ENCODE measurements at regions of chr19 and their contacts with region 1.

Region 1: DNA sequence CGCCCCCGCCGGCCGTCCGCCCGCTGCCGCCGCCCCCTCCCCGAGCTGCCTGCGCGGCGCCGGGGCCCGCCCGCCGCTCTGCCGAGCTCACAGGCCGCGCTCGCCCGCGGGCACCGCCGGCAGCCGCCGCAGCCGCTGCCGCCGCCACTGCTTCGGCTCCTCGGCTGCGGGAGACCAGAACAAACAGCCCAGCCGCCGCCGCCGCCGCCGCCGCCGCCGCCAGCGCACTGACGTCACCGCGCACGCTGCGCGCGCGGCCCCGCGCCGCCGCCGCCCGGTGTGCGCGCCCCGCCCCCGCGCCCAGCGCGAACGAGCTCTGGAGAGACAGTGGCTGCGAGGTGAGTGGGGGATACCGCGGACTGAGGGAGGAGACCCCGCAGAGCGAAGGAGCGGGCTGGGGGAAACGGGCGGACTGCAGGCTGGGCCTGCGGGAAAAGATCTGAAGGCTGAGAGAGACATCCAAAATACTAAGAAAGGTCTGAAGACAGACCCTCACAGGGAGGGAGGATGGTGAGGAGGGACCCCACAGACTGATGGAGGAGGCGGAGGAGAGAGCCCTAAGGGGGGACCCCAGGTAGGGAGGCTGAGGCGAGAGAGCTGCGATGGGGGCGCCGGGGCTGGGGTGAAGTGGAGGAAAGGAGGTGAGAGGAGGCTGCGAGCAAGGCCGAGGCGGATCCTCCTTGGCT is at the start of gene BRD4:
- DNase-seq: peak; percentile 58 to 88 (median 77)
- ATAC-seq: peak; percentile 63
- H3K4me3 ChIP-seq: peak within 1 kb of the TSS; percentile 81 to 97
- H3K4me3 Mint-ChIP-seq: peak within 1 kb of the TSS; percentile 95
- H3K27ac ChIP-seq: peak within 1 kb of the TSS; percentile 71 to 83
- H3K27ac Mint-ChIP-seq: peak within 1 kb of the TSS; percentile 96
- H3K4me1 ChIP-seq: peaks cover 42% of the 10 kb centered on the region
- H3K4me1 Mint-ChIP-seq: peaks cover 42% of the 10 kb centered on the region
- H3K27me3 ChIP-seq: no peaks in the 10 kb centered on the region
- H3K27me3 Mint-ChIP-seq: no peaks in the 10 kb centered on the region
- CTCF ChIP-seq: no peak
- total RNA-seq, gene BRD4: 123 to 128 TPM

Region 2: GRCh38 chr19:15125232-15126067 is 207.0 kb before region 1 on chr19:
- CTCF ChIA-PET with region 1: no interaction called
- POLR2A ChIA-PET with region 1: no interaction called
- intact Hi-C with region 1: loop called in 1 of 2 experiments (anchors 2 kb)
- DNase-seq: peak; percentile 94 to 99 (median 97)
- ATAC-seq: peak; percentile 85
- H3K4me3 ChIP-seq: peak overlapping the region; percentile 98 to 99
- H3K4me3 Mint-ChIP-seq: peak overlapping the region; percentile 99
- H3K27ac ChIP-seq: peak overlapping the region; percentile 91 to 98
- H3K27ac Mint-ChIP-seq: peak overlapping the region; percentile 98
- H3K4me1 ChIP-seq: peaks cover 34% of the 10 kb centered on the region
- H3K4me1 Mint-ChIP-seq: peaks cover 47% of the 10 kb centered on the region
- H3K27me3 ChIP-seq: no peaks in the 10 kb centered on the region
- H3K27me3 Mint-ChIP-seq: no peaks in the 10 kb centered on the region
- CTCF ChIP-seq: no peak

Region 3: DNA sequence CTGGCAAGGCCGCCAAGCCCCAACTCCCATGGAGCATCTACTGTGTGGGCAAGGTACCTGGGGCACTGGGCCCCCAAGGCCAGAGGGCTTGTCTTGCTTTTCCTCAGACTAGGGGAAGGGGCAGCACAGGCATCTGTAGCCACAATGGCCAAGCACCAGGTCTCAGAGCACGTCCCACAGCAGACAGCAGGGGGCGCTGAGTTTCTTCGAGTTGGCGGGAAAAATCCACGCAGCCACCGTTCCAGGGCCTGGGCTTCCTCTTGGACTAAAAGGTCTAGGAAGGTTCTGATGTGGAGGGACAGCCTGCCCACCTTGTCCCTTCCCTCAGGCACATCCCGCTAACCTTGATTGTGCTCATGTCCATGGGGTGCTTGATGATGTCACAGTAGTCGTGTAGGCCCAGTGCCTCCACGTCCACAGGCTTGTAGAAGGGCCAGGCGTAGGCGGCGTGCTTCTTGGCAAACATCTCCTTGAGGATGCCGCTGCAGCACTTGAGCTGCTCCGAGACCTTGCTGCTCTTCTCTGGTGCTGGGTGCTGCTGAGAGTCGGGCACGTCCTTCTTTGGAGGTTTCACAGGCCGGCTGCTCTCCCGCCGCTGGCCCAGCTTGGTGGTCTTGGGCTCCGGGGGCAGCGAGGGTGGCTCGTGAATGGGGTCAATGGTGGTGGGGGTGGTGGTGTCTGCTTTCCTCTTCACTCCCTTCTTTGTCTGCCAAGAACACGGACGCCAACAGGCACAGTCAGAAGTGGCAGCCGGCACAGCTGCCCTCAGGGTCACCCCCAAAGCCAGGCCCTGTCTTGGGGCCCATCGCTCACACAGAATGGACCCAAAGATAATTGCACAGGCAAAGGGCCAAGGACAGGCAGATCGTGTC is 68.2 kb before region 1 on chr19:
- CTCF ChIA-PET with region 1: no interaction called
- POLR2A ChIA-PET with region 1: no interaction called
- intact Hi-C with region 1: loop called in 1 of 2 experiments (anchors 2 kb)
- DNase-seq: peak; percentile 46 to 82 (median 72)
- ATAC-seq: peak; percentile 71
- H3K4me3 ChIP-seq: no peak overlapping the region
- H3K4me3 Mint-ChIP-seq: no peak overlapping the region
- H3K27ac ChIP-seq: no peak overlapping the region
- H3K27ac Mint-ChIP-seq: no peak overlapping the region
- H3K4me1 ChIP-seq: no peaks in the 10 kb centered on the region
- H3K4me1 Mint-ChIP-seq: peaks cover 3% of the 10 kb centered on the region
- H3K27me3 ChIP-seq: no peaks in the 10 kb centered on the region
- H3K27me3 Mint-ChIP-seq: no peaks in the 10 kb centered on the region
- CTCF ChIP-seq: peak; percentile 70

Region 4: GRCh38 chr19:15288146-15288963 is 44.1 kb before region 1 on chr19:
- CTCF ChIA-PET with region 1: no interaction called
- POLR2A ChIA-PET with region 1: interaction called, 4 read pairs
- intact Hi-C with region 1: loop called in 1 of 2 experiments (anchors 2 kb)
- DNase-seq: peak in 1 of 9 experiments; percentile 32
- ATAC-seq: no peak
- H3K4me3 ChIP-seq: peak overlapping the region in 1 of 2 experiments; percentile 6
- H3K4me3 Mint-ChIP-seq: peak overlapping the region; percentile 38
- H3K27ac ChIP-seq: no peak overlapping the region
- H3K27ac Mint-ChIP-seq: peak overlapping the region; percentile 55
- H3K4me1 ChIP-seq: peaks cover 95% of the 10 kb centered on the region
- H3K4me1 Mint-ChIP-seq: peaks cover 96% of the 10 kb centered on the region
- H3K27me3 ChIP-seq: no peaks in the 10 kb centered on the region
- H3K27me3 Mint-ChIP-seq: no peaks in the 10 kb centered on the region
- CTCF ChIP-seq: no peak

Region 5: GRCh38 chr19:15304140-15304705 is 28.2 kb before region 1 on chr19:
- CTCF ChIA-PET with region 1: no interaction called
- POLR2A ChIA-PET with region 1: no interaction called
- intact Hi-C with region 1: no loop called
- DNase-seq: no peak
- ATAC-seq: peak; percentile 34
- H3K4me3 ChIP-seq: no peak overlapping the region
- H3K4me3 Mint-ChIP-seq: peak overlapping the region; percentile 30
- H3K27ac ChIP-seq: no peak overlapping the region
- H3K27ac Mint-ChIP-seq: peak overlapping the region; percentile 41
- H3K4me1 ChIP-seq: peaks cover 64% of the 10 kb centered on the region
- H3K4me1 Mint-ChIP-seq: peaks cover 77% of the 10 kb centered on the region
- H3K27me3 ChIP-seq: no peaks in the 10 kb centered on the region
- H3K27me3 Mint-ChIP-seq: no peaks in the 10 kb centered on the region
- CTCF ChIP-seq: no peak

Region 6: GRCh38 chr19:15316498-15316897 is 16.0 kb before region 1 on chr19:
- CTCF ChIA-PET with region 1: no interaction called
- POLR2A ChIA-PET with region 1: interaction called, 3 read pairs
- intact Hi-C with region 1: loop called in 1 of 2 experiments (anchors 2 kb)
- DNase-seq: no peak
- ATAC-seq: no peak
- H3K4me3 ChIP-seq: no peak overlapping the region
- H3K4me3 Mint-ChIP-seq: peak overlapping the region; percentile 63
- H3K27ac ChIP-seq: no peak overlapping the region
- H3K27ac Mint-ChIP-seq: peak overlapping the region; percentile 84
- H3K4me1 ChIP-seq: peaks cover 83% of the 10 kb centered on the region
- H3K4me1 Mint-ChIP-seq: peaks cover 84% of the 10 kb centered on the region
- H3K27me3 ChIP-seq: no peaks in the 10 kb centered on the region
- H3K27me3 Mint-ChIP-seq: no peaks in the 10 kb centered on the region
- CTCF ChIP-seq: no peak

Measured in CD8-positive, alpha-beta T cell (primary cell).